Dorsolateral prefrontal cortex (tissue), 120 donors: ENCODE measurements at regions of chr2 and their contacts with region 1.

Region 1: GRCh38 chr2:32564417-32565035 is 63.3 kb upstream of the TTC27 start:
- DNase-seq: no peak
- H3K4me3 ChIP-seq: no peak overlapping the region
- H3K27ac ChIP-seq: peak overlapping the region in 12 of 59 donors; percentile 6 to 96 (median 79)
- H3K27me3 ChIP-seq: no peaks in the 10 kb centered on the region
- CTCF ChIP-seq: no peak

Region 2: GRCh38 chr2:32594573-32594972 is 30.0 kb after region 1 on chr2:
- intact Hi-C with region 1: no loop called
- DNase-seq: no peak
- H3K4me3 ChIP-seq: no peak overlapping the region
- H3K27ac ChIP-seq: no peak overlapping the region
- H3K27me3 ChIP-seq: no peaks in the 10 kb centered on the region
- CTCF ChIP-seq: no peak

Region 3: DNA sequence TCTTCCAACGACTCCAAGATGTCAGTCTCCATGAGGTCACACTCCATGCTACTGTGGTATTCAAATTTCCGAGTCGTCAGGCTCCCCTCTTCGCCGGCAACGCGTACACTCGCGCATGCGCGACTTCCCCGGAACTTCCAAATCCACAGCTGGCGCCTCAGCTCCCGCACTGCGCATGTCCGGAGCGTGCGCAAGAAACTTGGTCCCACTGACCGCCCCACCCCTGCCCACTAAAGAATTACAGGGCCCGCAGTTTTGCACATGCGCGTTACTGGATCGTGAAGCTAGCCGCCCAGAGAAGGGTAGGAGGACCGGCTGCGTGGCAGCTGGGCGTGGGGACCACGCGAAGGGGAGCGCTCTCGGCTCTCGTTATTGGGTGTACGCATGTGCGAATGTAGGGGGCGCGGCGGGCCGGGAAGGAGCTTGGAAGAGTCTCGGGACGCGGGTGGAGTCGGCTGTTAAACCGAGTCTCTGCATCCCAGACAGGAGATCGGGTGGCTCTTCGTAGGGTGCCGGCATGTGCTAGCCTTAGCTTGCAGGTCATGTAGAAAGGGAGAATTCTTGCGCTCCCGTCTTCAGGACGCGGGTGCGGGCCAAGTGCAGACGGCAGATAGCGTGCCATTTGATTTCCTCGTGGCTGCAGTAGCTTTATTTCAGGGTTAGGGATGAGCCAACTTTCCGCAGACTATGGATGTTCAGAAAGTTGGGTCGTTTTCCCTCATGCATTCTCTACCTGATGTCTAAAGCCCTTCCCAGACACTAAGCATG is 1034.8 kb after region 1 on chr2 and contains the start of gene FAM98A:
- intact Hi-C with region 1: loop called in 1 of 2 experiments (anchors 5 kb)
- DNase-seq: peak; percentile 96 to 99 (median 98)
- H3K4me3 ChIP-seq: peak within 1 kb of the TSS; percentile 68 to 99 (median 93)
- H3K27ac ChIP-seq: peak within 1 kb of the TSS; percentile 7 to 95 (median 84)
- H3K27me3 ChIP-seq: no peaks in the 10 kb centered on the region
- CTCF ChIP-seq: peak in 53 of 56 donors; percentile 12 to 69 (median 43)
- total RNA-seq, gene FAM98A: 32.7 to 127 (median 73.1) TPM